ENCODE measurements at regions of chr12 and their contacts with region 1.

Region 1: GRCh38 chr12:124613151-124613585 is 45.8 kb upstream of the NCOR2 start:
- DNase-seq: peak in 1 of 2 donors; percentile 18
- ATAC-seq: no peak
- H3K4me3 ChIP-seq: no peak overlapping the region
- H3K27ac ChIP-seq: no peak overlapping the region
- H3K4me1 ChIP-seq: no peaks in the 10 kb centered on the region
- H3K27me3 ChIP-seq: no peaks in the 10 kb centered on the region

Region 2: GRCh38 chr12:124338436-124338835 is 274.7 kb before region 1 on chr12:
- intact Hi-C with region 1: no loop called
- DNase-seq: no peak
- ATAC-seq: no peak
- H3K4me3 ChIP-seq: no peak overlapping the region
- H3K27ac ChIP-seq: no peak overlapping the region
- H3K4me1 ChIP-seq: no peaks in the 10 kb centered on the region
- H3K27me3 ChIP-seq: no peaks in the 10 kb centered on the region

Region 3: DNA sequence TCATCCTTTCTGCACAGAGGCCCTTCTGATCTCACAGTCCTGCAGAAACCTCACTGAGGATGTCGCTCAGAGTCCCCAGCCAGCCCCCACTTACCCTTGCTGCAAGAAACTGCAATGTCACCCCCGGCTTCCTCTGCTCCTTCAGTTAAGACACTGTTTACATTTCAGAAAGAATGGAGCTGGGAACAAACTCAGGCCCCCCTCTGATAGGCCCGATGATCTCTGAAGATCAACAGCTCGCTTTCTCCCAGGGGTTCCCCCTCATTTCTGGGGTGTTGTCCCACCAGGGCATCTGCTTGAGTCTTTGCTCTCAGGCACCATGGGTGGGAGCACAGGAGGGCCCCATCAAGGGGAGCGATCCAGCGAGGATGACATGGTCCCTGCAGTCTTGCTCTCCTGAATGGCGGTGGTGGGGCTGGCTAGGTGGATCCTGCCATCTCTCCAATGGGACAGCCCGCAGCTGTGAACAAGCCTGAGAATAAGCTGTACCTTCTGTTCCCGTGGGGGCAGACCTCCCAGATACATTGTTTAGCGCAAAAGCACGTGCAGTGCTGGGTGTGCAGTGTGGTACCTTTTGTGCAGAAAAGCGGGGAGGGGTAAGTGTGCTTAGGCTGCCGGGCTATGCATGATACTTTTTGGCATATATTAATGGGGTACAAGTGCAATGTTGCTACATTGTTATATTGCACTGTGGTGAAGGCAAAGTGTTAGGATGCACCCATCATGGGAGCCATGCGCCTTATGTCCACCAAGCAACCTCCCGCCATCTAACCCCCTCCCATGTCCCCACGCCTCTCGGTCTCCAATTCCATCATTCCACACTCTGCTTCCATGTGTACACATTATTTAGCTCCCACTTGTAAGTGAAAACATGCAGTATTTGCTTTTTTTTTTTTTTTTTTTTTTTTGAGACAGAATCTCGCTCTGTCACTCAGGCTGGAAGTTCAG is 39.1 kb before region 1 on chr12:
- intact Hi-C with region 1: loop called in 1 of 2 experiments (anchors 5 kb)
- DNase-seq: no peak
- ATAC-seq: no peak
- H3K4me3 ChIP-seq: no peak overlapping the region
- H3K27ac ChIP-seq: no peak overlapping the region
- H3K4me1 ChIP-seq: no peaks in the 10 kb centered on the region
- H3K27me3 ChIP-seq: no peaks in the 10 kb centered on the region

Region 4: GRCh38 chr12:124661341-124661740 is 48.2 kb after region 1 on chr12:
- intact Hi-C with region 1: no loop called
- DNase-seq: no peak
- ATAC-seq: no peak
- H3K4me3 ChIP-seq: no peak overlapping the region
- H3K27ac ChIP-seq: no peak overlapping the region
- H3K4me1 ChIP-seq: no peaks in the 10 kb centered on the region
- H3K27me3 ChIP-seq: no peaks in the 10 kb centered on the region